Head of caudate nucleus (tissue), 42 donors: ENCODE measurements at regions of chr1 and their contacts with region 1.

Region 1: GRCh38 chr1:45490626-45491486 is at the start of gene TESK2:
- DNase-seq: peak; percentile 96 to 100 (median 99)

Region 2: GRCh38 chr1:45205910-45206721 is 284.7 kb before region 1 on chr1 and contains the start of gene ZSWIM5:
- intact Hi-C with region 1: loop called (anchors 10 kb)
- DNase-seq: peak; percentile 12 to 90 (median 80)

Region 3: GRCh38 chr1:45359882-45360513 is 130.9 kb before region 1 on chr1:
- intact Hi-C with region 1: loop called (anchors 2 kb)
- DNase-seq: peak; percentile 45 to 89 (median 76)

Region 4: DNA sequence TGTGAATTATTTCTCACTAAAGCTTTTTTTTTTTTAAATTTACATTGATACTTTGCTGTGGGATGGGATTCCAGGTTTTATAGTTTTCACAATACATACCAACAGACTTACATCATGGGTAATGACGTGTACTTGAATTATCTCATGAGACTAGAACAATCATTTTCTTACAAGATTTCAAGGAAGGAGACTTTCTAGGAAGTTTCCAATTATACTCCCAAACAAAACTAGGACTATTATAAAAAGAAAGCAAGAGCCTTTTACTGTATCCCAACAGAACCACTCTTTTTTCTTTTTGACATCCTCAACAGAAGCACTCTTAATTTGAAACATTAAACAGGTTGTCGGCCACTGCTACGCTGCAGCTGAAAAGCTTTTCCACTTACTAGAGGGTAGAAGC is 48.6 kb before region 1 on chr1:
- intact Hi-C with region 1: no loop called
- DNase-seq: no peak